AG04449 (cell line): ENCODE measurements at regions of chr10 and their contacts with region 1.

Region 1: DNA sequence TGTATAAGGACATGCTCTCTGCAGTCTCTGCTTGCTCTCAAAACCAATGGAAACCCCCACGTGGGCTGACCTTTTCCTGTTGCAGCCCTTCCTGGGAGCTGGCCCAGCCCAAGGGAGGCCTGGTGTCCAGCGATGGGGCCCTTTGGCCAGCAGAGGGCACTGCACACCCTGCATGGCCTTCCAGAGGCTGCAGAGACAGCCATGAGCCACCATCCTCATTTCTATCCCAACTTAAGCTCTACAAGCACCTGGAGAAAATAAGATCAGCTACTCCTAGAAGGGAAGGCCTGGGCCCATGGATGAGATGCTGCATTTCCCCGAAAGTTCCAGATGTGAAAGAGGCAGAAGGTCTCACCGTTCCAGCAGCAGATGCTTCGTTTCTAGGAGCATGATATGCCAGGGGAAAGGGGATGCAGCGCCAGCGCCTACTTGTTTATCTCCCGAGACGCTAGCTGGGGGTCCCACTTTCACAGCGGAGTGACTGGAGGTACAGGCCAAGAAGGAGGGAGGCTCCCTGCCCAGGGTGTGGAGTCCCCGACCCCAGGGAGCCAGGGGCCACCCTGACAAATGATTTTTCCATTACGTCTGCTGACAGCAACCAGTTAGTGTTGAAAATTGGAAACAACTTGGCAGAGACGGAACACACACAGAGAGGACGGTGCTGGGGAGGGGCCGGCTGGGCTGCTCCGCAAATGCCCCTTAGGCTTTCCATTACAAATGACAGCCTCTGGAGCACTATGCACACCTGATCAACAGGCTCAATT is 106.4 kb downstream of the ZRANB1 start:
- DNase-seq: no peak
- H3K4me3 ChIP-seq: no peak overlapping the region
- CTCF ChIP-seq: peak; percentile 99

Region 2: GRCh38 chr10:124921261-124921660 is 127.0 kb before region 1 on chr10:
- CTCF ChIA-PET with region 1: no interaction called
- POLR2A ChIA-PET with region 1: no interaction called
- DNase-seq: no peak
- H3K4me3 ChIP-seq: no peak overlapping the region
- CTCF ChIP-seq: no peak

Region 3: DNA sequence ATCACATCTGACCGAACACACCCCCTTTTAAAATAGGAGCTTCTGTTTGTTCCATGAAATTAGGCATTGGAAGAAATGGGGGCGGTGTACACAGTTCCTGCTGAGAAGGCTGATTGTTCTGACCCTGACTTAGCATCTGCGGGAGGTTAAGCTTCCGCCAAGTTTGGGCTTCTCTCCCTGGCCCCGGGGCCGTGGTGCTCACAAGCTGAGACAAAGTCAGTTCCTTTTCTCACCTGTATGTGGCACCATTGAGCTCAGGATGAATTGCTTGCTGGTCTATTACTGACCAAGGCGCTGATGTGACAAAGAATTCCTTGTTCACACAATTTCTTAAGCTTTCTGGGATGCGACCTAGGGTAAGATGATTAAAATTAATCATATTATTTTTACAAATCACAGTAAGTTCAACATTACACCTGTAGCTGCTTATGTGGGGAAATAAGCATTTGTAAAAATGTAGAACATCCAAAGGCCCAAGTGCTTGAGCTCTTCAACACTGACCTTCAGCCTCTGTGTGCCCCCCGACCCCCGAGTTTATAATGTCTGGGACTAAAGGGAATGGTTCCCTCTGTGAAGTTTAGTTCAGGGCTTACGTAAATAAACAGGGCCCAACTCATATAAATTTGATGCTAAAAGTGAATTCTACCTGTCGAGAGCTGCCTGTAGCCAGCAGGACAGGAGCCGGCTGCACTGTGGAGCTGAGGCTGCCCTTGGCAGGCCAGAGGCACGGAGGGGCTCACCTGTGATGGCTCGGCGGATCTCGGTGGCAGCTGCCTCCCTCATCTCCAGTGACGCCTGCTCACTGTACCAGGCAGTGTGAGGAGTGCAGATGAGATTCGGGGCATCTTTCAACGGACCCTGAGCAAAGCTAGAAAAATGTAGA is 55.6 kb before region 1 on chr10:
- CTCF ChIA-PET with region 1: interaction called, 25 read pairs
- POLR2A ChIA-PET with region 1: no interaction called
- DNase-seq: no peak
- H3K4me3 ChIP-seq: no peak overlapping the region
- CTCF ChIP-seq: peak; percentile 47

Region 4: GRCh38 chr10:125027871-125028869 is 20.1 kb before region 1 on chr10:
- CTCF ChIA-PET with region 1: interaction called, 88 read pairs
- POLR2A ChIA-PET with region 1: no interaction called
- DNase-seq: no peak
- H3K4me3 ChIP-seq: no peak overlapping the region
- CTCF ChIP-seq: no peak

Region 5: GRCh38 chr10:125084191-125084613 is 35.9 kb after region 1 on chr10:
- CTCF ChIA-PET with region 1: interaction called, 20 read pairs
- POLR2A ChIA-PET with region 1: no interaction called
- DNase-seq: peak; percentile 76
- H3K4me3 ChIP-seq: no peak overlapping the region
- CTCF ChIP-seq: peak; percentile 48

Region 6: GRCh38 chr10:125343118-125343925 is 295.0 kb after region 1 on chr10:
- CTCF ChIA-PET with region 1: interaction called, 13 read pairs
- POLR2A ChIA-PET with region 1: no interaction called
- DNase-seq: no peak
- H3K4me3 ChIP-seq: no peak overlapping the region
- CTCF ChIP-seq: peak; percentile 58